Common myeloid progenitor, CD34-positive (primary cell): ENCODE measurements at regions of chr7 and their contacts with region 1.

Region 1: GRCh38 chr7:19480383-19480782 is 228.5 kb downstream of the POLR1F start:
- DNase-seq: no peak
- H3K4me3 ChIP-seq: no peak overlapping the region
- H3K27ac ChIP-seq: no peak overlapping the region
- H3K4me1 ChIP-seq: no peaks in the 10 kb centered on the region
- H3K27me3 ChIP-seq: no peaks in the 10 kb centered on the region

Region 2: DNA sequence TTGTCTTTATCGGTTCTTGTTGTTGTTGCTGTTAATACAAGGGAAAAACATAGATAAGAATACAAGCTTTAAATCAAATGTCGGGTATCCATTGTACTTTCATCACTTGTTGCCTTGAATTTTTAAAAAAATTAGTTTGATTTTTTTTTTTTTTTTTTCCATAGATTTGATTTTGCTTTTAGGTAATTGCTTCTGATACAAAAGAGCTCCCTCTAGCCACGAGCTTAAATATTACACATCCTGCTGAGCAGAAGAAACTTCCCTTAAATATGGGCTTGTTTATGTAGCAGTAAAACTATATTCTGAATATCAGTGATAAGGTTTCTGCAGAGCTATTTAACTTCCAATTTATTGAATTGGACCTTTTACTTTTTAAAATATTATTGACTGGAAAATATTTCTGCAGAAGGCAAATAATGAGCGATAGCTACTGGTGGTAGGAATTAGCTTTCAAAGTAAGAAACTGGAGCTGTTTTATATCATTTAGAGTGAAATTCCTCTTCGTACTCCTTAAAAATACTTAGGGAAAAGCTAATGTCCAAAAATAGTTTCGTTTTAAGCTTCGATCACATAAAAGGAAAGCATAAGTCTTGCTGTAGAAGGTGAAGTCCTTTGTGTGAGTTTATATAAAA is 11.6 kb after region 1 on chr7:
- CTCF ChIA-PET with region 1: interaction called, 12 read pairs
- POLR2A ChIA-PET with region 1: no interaction called
- DNase-seq: peak; percentile 39 to 75 (median 70)
- H3K4me3 ChIP-seq: no peak overlapping the region
- H3K27ac ChIP-seq: no peak overlapping the region
- H3K4me1 ChIP-seq: no peaks in the 10 kb centered on the region
- H3K27me3 ChIP-seq: no peaks in the 10 kb centered on the region